CD14-positive monocyte (primary cell): ENCODE measurements at regions of chr2 and their contacts with region 1.

Region 1: DNA sequence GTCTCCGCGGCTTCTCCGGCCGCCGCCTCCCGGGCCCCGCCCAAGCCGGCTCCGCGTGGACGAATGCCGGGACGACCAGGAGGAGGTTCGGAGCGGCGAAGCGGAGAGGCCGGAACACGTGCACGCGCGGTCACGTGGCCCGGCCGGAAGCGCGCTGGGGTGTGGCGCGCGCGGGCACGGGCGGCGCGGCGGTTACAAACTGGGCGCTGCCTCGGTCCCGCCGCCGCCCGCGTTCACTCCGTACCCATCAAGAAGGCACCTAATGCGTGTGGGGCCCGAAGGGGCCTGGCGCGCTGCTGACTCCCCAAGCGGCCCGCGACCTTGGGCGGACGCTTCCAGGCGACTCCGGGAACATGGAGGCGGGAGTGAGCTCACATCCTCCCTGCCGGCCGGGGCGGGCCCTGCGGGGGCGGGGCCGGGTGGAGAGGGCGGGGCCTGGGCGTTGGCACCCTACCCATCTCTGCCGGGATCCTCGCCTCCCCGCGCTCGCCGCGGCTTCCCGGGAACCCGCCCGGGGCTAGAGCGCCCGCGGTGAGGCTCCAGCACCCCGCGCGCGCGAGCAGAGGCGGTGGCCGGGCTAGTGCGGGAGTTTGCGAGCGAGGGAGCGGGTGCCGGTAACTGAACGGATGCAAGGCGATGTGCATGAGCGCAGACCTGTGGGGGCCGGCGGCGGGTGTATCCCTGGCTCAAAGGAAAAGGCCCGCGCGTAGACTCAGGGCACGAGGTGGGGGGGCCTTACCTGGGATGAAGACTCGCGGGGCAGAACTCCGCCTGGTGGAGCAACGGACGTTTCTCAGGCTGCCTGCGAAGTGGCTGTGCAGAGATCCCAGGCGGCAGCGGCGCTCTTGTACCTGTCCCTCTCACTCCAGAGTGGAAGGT is at the start of gene TMEM185B:
- DNase-seq: peak; percentile 77 to 79 (median 78)
- H3K4me3 ChIP-seq: peak within 1 kb of the TSS; percentile 53 to 80 (median 57)
- H3K4me3 Mint-ChIP-seq: peak within 1 kb of the TSS; percentile 83 to 89
- H3K27ac ChIP-seq: peak within 1 kb of the TSS; percentile 68 to 95
- H3K27ac Mint-ChIP-seq: peak within 1 kb of the TSS; percentile 78 to 96 (median 93)
- H3K4me1 ChIP-seq: peaks cover 13 to 30% of the 10 kb centered on the region in 2 donors
- H3K4me1 Mint-ChIP-seq: peaks cover 36% of the 10 kb centered on the region
- H3K27me3 ChIP-seq: peaks cover 0 to 5% of the 10 kb centered on the region in 2 donors
- H3K27me3 Mint-ChIP-seq: peaks cover 11 to 24% (median 22%) of the 10 kb centered on the region in 3 donors
- CTCF ChIP-seq: peak; percentile 2
- polyA plus RNA-seq, gene TMEM185B: 9.7 to 20.4 (median 18.1) TPM

Region 2: GRCh38 chr2:120177001-120177621 is 46.2 kb before region 1 on chr2:
- intact Hi-C with region 1: no loop called
- DNase-seq: peak; percentile 52 to 65 (median 63)
- H3K4me3 ChIP-seq: peak overlapping the region; percentile 52 to 76 (median 59)
- H3K4me3 Mint-ChIP-seq: peak overlapping the region; percentile 93 to 99
- H3K27ac ChIP-seq: peak overlapping the region; percentile 74 to 86
- H3K27ac Mint-ChIP-seq: peak overlapping the region; percentile 84 to 98 (median 93)
- H3K4me1 ChIP-seq: peaks cover 21 to 23% of the 10 kb centered on the region in 2 donors
- H3K4me1 Mint-ChIP-seq: peaks cover 28% of the 10 kb centered on the region
- H3K27me3 ChIP-seq: no peaks in the 10 kb centered on the region
- H3K27me3 Mint-ChIP-seq: peaks cover 3 to 11% (median 4%) of the 10 kb centered on the region in 3 donors
- CTCF ChIP-seq: peak; percentile 74

Region 3: DNA sequence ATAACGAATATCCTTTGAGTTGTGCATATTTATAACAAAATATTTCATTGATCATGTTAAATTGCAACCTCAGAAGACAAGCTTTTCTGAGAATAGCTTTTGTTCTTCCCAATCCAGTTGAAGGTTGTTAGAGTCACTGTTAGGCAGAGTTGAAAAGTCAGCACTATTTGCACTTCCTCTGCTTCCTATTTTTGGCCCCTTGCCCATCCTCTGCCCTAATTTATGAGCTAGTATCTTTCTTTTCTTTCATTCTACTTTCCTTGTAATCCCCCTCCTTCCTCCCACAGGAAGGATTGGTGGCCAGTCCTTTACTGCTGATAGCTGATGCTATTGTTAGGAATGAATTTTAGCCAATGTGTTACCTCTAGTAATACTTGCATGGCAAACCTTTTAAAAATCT is 34.2 kb after region 1 on chr2:
- intact Hi-C with region 1: loop called in 1 of 2 experiments (anchors 5 kb)
- DNase-seq: peak; percentile 23 to 48 (median 41)
- H3K4me3 ChIP-seq: peak overlapping the region in 1 of 3 experiments; percentile 12
- H3K4me3 Mint-ChIP-seq: peak overlapping the region in 1 of 2 donors; percentile 36
- H3K27ac ChIP-seq: peak overlapping the region in 1 of 2 donors; percentile 60
- H3K27ac Mint-ChIP-seq: peak overlapping the region in 4 of 7 donors; percentile 7 to 68 (median 36)
- H3K4me1 ChIP-seq: peaks cover 58 to 71% of the 10 kb centered on the region in 2 donors
- H3K4me1 Mint-ChIP-seq: peaks cover 57% of the 10 kb centered on the region
- H3K27me3 ChIP-seq: no peaks in the 10 kb centered on the region
- H3K27me3 Mint-ChIP-seq: no peaks in the 10 kb centered on the region
- CTCF ChIP-seq: no peak

Region 4: GRCh38 chr2:120312861-120313694 is 89.8 kb after region 1 on chr2:
- intact Hi-C with region 1: loop called in 1 of 2 experiments (anchors 10 kb)
- DNase-seq: peak; percentile 54 to 61 (median 54)
- H3K4me3 ChIP-seq: peak overlapping the region; percentile 3 to 66 (median 10)
- H3K4me3 Mint-ChIP-seq: peak overlapping the region; percentile 70 to 90
- H3K27ac ChIP-seq: no peak overlapping the region
- H3K27ac Mint-ChIP-seq: peak overlapping the region in 1 of 7 donors; percentile 64
- H3K4me1 ChIP-seq: peaks cover 6 to 9% of the 10 kb centered on the region in 2 donors
- H3K4me1 Mint-ChIP-seq: peaks cover 17% of the 10 kb centered on the region
- H3K27me3 ChIP-seq: peaks cover 0 to 8% of the 10 kb centered on the region in 2 donors
- H3K27me3 Mint-ChIP-seq: peaks cover 19 to 28% (median 21%) of the 10 kb centered on the region in 3 donors
- CTCF ChIP-seq: peak; percentile 94